Posterior vena cava (tissue), 2 donors: ENCODE measurements at regions of chr21 and their contacts with region 1.

Region 1: GRCh38 chr21:43789276-43790009 is at the start of gene RRP1:
- DNase-seq: peak; percentile 97
- total RNA-seq, gene RRP1: 10.7 to 14.3 TPM

Region 2: GRCh38 chr21:43600642-43601402 is 188.6 kb before region 1 on chr21:
- intact Hi-C with region 1: no loop called
- DNase-seq: no peak

Region 3: GRCh38 chr21:43676391-43676790 is 113.1 kb before region 1 on chr21:
- intact Hi-C with region 1: loop called in 1 of 2 experiments (anchors 10 kb)
- DNase-seq: no peak

Region 4: GRCh38 chr21:44092211-44092610 is 302.8 kb after region 1 on chr21:
- intact Hi-C with region 1: no loop called
- DNase-seq: no peak